CD8-positive, alpha-beta T cell (primary cell): ENCODE measurements at regions of chr2 and their contacts with region 1.

Region 1: DNA sequence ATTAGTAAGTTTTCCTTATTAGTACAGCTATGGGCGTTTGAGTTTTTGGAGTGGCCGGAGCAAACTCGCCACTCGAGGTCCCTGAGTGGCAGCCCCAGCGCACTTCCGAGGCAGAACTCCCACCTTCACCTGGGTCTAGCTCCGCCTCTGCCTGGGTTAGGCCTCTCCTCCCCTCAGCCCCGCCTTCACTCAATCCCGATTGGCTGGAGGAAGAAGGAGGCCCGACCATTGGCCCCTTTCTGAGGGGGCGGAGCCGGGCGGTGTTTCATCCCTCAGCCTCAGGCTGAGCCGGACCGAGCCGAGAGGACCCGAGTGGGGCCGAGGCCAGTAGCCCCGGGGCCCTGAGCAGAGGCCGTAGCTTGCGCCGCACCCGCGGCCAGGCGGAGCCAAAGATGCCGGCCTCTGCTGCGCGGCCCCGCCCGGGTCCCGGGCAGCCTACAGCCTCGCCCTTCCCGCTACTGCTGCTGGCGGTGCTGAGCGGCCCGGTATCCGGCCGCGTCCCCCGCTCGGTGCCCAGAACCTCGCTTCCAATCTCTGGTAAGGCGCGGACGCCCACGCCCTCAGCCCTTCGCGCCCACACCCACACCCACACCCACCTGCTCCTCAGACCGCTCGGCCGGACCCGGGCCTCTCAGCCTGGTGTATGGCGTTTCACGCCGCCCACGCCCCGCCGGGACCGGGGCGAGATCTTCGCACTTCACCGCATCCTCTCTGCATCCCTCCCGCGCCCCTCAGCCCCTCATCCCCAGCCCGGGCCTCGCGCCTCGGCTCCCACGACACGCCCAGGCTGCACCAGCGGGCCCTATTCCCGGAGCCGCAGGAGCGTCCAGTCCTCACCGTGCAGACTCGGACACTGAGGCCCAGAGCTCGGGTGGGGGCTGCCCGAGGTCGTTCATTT is at the start of gene SEMA4F:
- DNase-seq: peak; percentile 85 to 96 (median 93)
- ATAC-seq: peak; percentile 99
- H3K4me3 ChIP-seq: peak within 1 kb of the TSS; percentile 76 to 78
- H3K4me3 Mint-ChIP-seq: peak within 1 kb of the TSS; percentile 90
- H3K27ac ChIP-seq: peak within 1 kb of the TSS in 1 of 2 experiments; percentile 48
- H3K27ac Mint-ChIP-seq: peak within 1 kb of the TSS; percentile 79
- H3K4me1 ChIP-seq: peaks cover 12% of the 10 kb centered on the region
- H3K4me1 Mint-ChIP-seq: peaks cover 19% of the 10 kb centered on the region
- H3K27me3 ChIP-seq: no peaks in the 10 kb centered on the region
- H3K27me3 Mint-ChIP-seq: peaks cover 11% of the 10 kb centered on the region
- CTCF ChIP-seq: no peak
- total RNA-seq, gene SEMA4F: 4.6 to 5.9 TPM

Region 2: GRCh38 chr2:74391580-74392448 is 262.4 kb before region 1 on chr2:
- CTCF ChIA-PET with region 1: no interaction called
- POLR2A ChIA-PET with region 1: no interaction called
- intact Hi-C with region 1: loop called in 1 of 2 experiments (anchors 10 kb)
- DNase-seq: peak; percentile 91 to 98 (median 95)
- ATAC-seq: peak; percentile 90
- H3K4me3 ChIP-seq: peak overlapping the region; percentile 67 to 87
- H3K4me3 Mint-ChIP-seq: peak overlapping the region; percentile 99
- H3K27ac ChIP-seq: peak overlapping the region; percentile 87 to 96
- H3K27ac Mint-ChIP-seq: peak overlapping the region; percentile 100
- H3K4me1 ChIP-seq: peaks cover 20% of the 10 kb centered on the region
- H3K4me1 Mint-ChIP-seq: peaks cover 9% of the 10 kb centered on the region
- H3K27me3 ChIP-seq: no peaks in the 10 kb centered on the region
- H3K27me3 Mint-ChIP-seq: no peaks in the 10 kb centered on the region
- CTCF ChIP-seq: peak; percentile 96

Region 3: DNA sequence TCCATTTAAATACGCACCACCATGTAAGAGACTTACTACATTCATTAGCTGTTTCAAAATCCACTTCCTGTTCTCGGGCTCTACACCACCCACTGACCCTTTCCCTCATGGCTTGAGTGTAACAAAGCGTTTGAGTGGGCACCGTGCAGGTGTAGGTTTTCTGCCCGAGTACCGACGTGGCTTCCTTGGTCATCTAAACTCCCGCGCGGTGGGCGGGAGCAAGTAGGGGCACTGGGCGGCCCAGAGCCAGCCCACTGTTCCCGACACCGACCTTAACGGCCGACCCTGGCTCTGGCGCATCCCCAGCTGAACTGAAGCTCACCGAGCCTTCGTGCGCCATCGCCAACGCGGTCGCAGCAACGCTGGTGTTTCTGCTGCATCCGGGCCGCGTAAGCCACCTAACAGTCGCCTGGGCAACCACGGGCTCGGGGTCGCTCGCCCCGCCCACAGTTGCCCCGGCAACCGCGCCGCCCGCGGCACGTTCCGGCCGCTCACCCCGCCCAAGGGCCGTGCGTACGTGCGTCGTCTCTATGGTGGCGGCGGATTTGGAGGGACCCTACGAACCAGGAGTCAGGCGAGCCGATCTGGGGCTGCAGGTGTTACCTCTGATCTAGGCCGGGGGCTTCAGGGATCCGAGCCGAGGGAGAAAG is 232.9 kb before region 1 on chr2 and contains the starts of genes C2orf81 and WDR54:
- CTCF ChIA-PET with region 1: no interaction called
- POLR2A ChIA-PET with region 1: no interaction called
- intact Hi-C with region 1: loop called (anchors 1 kb)
- DNase-seq: peak; percentile 90 to 98 (median 95)
- ATAC-seq: peak; percentile 88
- H3K4me3 ChIP-seq: peak within 1 kb of the TSS; percentile 72 to 92
- H3K4me3 Mint-ChIP-seq: peak within 1 kb of the TSS; percentile 98
- H3K27ac ChIP-seq: peak within 1 kb of the TSS; percentile 96 to 97
- H3K27ac Mint-ChIP-seq: peak within 1 kb of the TSS; percentile 96
- H3K4me1 ChIP-seq: peaks cover 20% of the 10 kb centered on the region
- H3K4me1 Mint-ChIP-seq: peaks cover 17% of the 10 kb centered on the region
- H3K27me3 ChIP-seq: no peaks in the 10 kb centered on the region
- H3K27me3 Mint-ChIP-seq: no peaks in the 10 kb centered on the region
- CTCF ChIP-seq: no peak
- total RNA-seq, gene C2orf81: 0.75 to 1.8 TPM
- total RNA-seq, gene WDR54: 18.4 to 19.8 TPM

Region 4: GRCh38 chr2:74458132-74458925 is 195.9 kb before region 1 on chr2 and contains the start of gene WBP1:
- CTCF ChIA-PET with region 1: no interaction called
- POLR2A ChIA-PET with region 1: no interaction called
- intact Hi-C with region 1: loop called in 1 of 2 experiments (anchors 5 kb)
- DNase-seq: peak; percentile 96 to 100 (median 98)
- ATAC-seq: peak; percentile 77
- H3K4me3 ChIP-seq: peak within 1 kb of the TSS; percentile 84 to 95
- H3K4me3 Mint-ChIP-seq: peak within 1 kb of the TSS; percentile 97
- H3K27ac ChIP-seq: peak within 1 kb of the TSS; percentile 93 to 100
- H3K27ac Mint-ChIP-seq: peak within 1 kb of the TSS; percentile 99
- H3K4me1 ChIP-seq: peaks cover 34% of the 10 kb centered on the region
- H3K4me1 Mint-ChIP-seq: peaks cover 57% of the 10 kb centered on the region
- H3K27me3 ChIP-seq: no peaks in the 10 kb centered on the region
- H3K27me3 Mint-ChIP-seq: no peaks in the 10 kb centered on the region
- CTCF ChIP-seq: no peak
- total RNA-seq, gene WBP1: 68.5 to 70.6 TPM

Region 5: GRCh38 chr2:74553892-74554645 is 100.2 kb before region 1 on chr2 and contains the start of gene LOXL3:
- CTCF ChIA-PET with region 1: no interaction called
- POLR2A ChIA-PET with region 1: interaction called, 4 read pairs
- intact Hi-C with region 1: loop called in 1 of 2 experiments (anchors 10 kb)
- DNase-seq: peak in 6 of 9 experiments; percentile 58 to 87 (median 70)
- ATAC-seq: peak; percentile 63
- H3K4me3 ChIP-seq: peak within 1 kb of the TSS; percentile 97 to 100
- H3K4me3 Mint-ChIP-seq: peak within 1 kb of the TSS; percentile 91
- H3K27ac ChIP-seq: peak within 1 kb of the TSS; percentile 66 to 77
- H3K27ac Mint-ChIP-seq: peak within 1 kb of the TSS; percentile 84
- H3K4me1 ChIP-seq: peaks cover 17% of the 10 kb centered on the region
- H3K4me1 Mint-ChIP-seq: peaks cover 10% of the 10 kb centered on the region
- H3K27me3 ChIP-seq: peaks cover 2 to 11% of the 10 kb centered on the region in 2 experiments
- H3K27me3 Mint-ChIP-seq: peaks cover 19% of the 10 kb centered on the region
- CTCF ChIP-seq: no peak
- total RNA-seq, gene LOXL3: not detected

Region 6: DNA sequence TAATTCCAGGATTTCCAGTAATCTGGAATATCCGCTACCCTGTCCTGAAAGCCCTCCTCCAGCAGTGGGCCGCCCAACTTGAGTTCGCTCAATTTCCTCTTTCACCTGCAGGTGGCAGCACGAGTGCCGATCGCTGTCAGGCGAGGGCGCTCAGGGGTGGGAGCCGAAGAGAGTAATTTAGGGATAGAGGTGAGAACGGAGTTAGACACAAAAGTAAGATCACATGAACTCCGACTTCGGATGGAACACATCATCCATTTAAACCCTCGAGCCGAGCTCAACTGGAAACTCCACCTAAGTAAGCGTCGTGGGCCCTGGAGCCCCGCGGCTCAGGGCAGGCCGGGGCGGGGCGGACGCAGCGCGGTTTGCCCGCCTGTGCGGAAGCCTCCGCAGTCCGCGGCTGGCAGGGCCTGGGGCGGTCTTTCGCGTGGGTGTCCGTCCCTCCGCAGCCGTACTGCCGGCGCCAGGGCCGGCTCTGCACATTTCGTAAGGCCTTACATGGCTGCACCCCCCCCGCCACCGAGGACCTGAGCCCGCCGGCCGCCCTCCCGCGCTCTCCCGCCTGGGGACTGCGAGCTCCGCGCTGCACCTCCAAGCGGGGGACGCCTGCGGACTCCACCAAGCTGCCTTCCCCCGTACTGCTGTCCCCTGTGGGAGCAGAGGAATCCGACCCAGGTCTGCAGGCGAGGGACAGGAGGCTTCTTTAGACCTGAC is 61.0 kb after region 1 on chr2:
- CTCF ChIA-PET with region 1: no interaction called
- POLR2A ChIA-PET with region 1: no interaction called
- intact Hi-C with region 1: no loop called
- DNase-seq: peak; percentile 60 to 86 (median 79)
- ATAC-seq: peak; percentile 92
- H3K4me3 ChIP-seq: peak overlapping the region; percentile 29 to 35
- H3K4me3 Mint-ChIP-seq: peak overlapping the region; percentile 94
- H3K27ac ChIP-seq: no peak overlapping the region
- H3K27ac Mint-ChIP-seq: no peak overlapping the region
- H3K4me1 ChIP-seq: peaks cover 5% of the 10 kb centered on the region
- H3K4me1 Mint-ChIP-seq: peaks cover 9% of the 10 kb centered on the region
- H3K27me3 ChIP-seq: peaks cover 0 to 2% of the 10 kb centered on the region in 2 experiments
- H3K27me3 Mint-ChIP-seq: peaks cover 17% of the 10 kb centered on the region
- CTCF ChIP-seq: peak; percentile 84

Region 7: DNA sequence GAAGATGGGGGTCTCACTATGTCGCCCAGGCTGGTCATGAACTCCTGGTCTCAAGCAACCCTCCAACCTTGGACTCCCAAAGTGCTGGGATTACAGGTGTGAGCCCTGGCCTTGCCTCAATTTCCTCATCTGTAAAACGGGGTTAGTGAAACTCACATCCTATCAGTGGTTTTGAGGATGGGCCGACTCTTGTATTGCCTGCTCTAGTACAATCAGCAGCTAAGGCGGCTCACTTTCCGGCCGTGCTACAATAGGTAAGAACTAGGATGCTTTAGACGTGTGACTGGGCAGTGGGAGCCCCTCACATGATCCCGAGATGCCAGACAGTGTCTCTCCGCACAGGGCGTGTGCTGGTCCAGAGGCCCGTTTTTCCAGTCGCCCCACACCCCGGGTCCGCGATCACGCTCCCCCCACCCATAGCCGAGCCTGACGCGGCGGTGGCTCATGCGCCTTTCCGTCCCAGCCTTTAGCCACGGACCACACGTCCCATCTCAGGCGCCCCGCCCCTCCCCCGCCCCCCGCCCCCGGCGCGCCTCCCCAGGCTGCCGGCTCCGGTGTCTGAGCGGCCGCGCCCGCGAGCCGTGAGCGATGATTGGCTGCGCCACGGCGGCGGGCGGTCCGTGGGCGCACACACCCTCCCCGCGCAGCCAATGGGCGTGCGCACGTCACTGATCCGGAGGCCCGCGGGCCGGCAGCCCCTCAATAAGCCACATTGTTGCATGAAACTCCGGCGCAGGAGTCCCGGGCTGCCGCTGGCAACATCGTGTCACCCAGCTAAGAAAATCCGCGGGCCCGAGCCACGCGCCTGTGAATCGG is 179.4 kb after region 1 on chr2 and contains the start of gene HK2:
- CTCF ChIA-PET with region 1: no interaction called
- POLR2A ChIA-PET with region 1: no interaction called
- intact Hi-C with region 1: loop called (anchors 5 kb)
- DNase-seq: peak; percentile 54 to 89 (median 78)
- ATAC-seq: peak; percentile 83
- H3K4me3 ChIP-seq: peak within 1 kb of the TSS; percentile 58 to 76
- H3K4me3 Mint-ChIP-seq: peak within 1 kb of the TSS; percentile 89
- H3K27ac ChIP-seq: peak within 1 kb of the TSS in 1 of 2 experiments; percentile 53
- H3K27ac Mint-ChIP-seq: peak within 1 kb of the TSS; percentile 85
- H3K4me1 ChIP-seq: peaks cover 25% of the 10 kb centered on the region
- H3K4me1 Mint-ChIP-seq: peaks cover 35% of the 10 kb centered on the region
- H3K27me3 ChIP-seq: peaks cover 0 to 3% of the 10 kb centered on the region in 2 experiments
- H3K27me3 Mint-ChIP-seq: no peaks in the 10 kb centered on the region
- CTCF ChIP-seq: no peak
- total RNA-seq, gene HK2: 6.5 to 8.9 TPM